ENCODE measurements at regions of chr17 and their contacts with region 1.

Region 1: GRCh38 chr17:38674749-38675615 is at the start of gene EPOP:
- DNase-seq: peak; percentile 83

Region 2: GRCh38 chr17:38605888-38606645 is 68.9 kb before region 1 on chr17 and contains the start of gene SRCIN1:
- CTCF ChIA-PET with region 1: no interaction called
- POLR2A ChIA-PET with region 1: no interaction called
- DNase-seq: peak; percentile 74

Region 3: GRCh38 chr17:38735161-38735997 is 60.4 kb after region 1 on chr17:
- CTCF ChIA-PET with region 1: interaction called, 11 read pairs
- POLR2A ChIA-PET with region 1: interaction called, 10 read pairs
- DNase-seq: peak; percentile 68